IMR-90 (cell line): ENCODE measurements at regions of chr2 and their contacts with region 1.

Region 1: DNA sequence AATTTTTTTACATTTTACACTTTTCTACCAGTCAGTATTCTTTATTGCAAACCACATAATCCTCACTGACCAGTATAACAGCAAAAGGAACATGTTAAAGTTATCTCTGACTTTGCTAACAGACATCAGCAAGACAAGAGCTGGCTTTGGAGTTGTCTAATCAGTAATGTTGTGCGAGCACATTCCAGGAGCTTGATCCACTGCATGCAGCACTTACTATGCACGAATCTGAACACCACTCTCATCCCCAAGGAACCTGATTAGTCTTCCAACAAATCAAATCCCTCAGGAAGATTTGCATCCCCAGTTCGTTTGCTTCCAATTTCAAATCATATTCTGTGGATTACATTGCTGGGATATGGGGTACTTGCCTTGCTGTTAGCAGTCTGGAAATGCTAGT is 269.3 kb upstream of the EPC2 start:
- DNase-seq: peak; percentile 28
- ATAC-seq: peak; percentile 76
- H3K4me3 ChIP-seq: no peak overlapping the region
- H3K27ac ChIP-seq: no peak overlapping the region
- H3K4me1 ChIP-seq: no peaks in the 10 kb centered on the region
- H3K27me3 ChIP-seq: no peaks in the 10 kb centered on the region
- CTCF ChIP-seq: no peak
- POLR2A ChIP-seq: no peak
- RAD21 ChIP-seq: no peak

Region 2: DNA sequence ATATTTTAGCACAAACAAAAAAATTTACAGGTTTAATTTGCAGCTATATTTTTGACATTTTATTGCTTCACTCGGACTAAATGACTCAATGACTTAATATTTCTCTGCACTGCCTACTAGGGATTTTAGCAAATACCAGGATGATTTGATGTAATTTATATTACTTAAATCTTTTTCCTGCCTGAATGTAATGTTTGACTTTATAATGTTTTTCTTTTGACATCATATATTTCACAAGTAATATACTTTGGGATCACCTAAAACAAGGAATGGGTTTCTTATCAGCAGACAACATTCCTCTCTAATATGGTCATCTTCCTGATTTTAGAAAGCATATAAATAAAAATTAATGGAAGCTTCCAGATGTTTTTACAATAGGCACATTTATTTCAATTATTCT is 16.1 kb after region 1 on chr2:
- CTCF ChIA-PET with region 1: no interaction called
- POLR2A ChIA-PET with region 1: no interaction called
- dilution Hi-C with region 1: no loop called
- in situ Hi-C with region 1: no loop called
- intact Hi-C with region 1: loop called (anchors 2 kb)
- DNase-seq: peak; percentile 86
- ATAC-seq: peak; percentile 78
- H3K4me3 ChIP-seq: no peak overlapping the region
- H3K27ac ChIP-seq: no peak overlapping the region
- H3K4me1 ChIP-seq: peaks cover 2% of the 10 kb centered on the region
- H3K27me3 ChIP-seq: no peaks in the 10 kb centered on the region
- CTCF ChIP-seq: no peak
- POLR2A ChIP-seq: no peak
- RAD21 ChIP-seq: no peak